Activated CD4-positive, alpha-beta T cell treated with anti-CD3 and anti-CD28 coated beads, Interleukin-2, amount 10 ng/mL, durations not matched to agents 24 days and 14 days (primary cell): ENCODE measurements at regions of chr16 and their contacts with region 1.

Region 1: DNA sequence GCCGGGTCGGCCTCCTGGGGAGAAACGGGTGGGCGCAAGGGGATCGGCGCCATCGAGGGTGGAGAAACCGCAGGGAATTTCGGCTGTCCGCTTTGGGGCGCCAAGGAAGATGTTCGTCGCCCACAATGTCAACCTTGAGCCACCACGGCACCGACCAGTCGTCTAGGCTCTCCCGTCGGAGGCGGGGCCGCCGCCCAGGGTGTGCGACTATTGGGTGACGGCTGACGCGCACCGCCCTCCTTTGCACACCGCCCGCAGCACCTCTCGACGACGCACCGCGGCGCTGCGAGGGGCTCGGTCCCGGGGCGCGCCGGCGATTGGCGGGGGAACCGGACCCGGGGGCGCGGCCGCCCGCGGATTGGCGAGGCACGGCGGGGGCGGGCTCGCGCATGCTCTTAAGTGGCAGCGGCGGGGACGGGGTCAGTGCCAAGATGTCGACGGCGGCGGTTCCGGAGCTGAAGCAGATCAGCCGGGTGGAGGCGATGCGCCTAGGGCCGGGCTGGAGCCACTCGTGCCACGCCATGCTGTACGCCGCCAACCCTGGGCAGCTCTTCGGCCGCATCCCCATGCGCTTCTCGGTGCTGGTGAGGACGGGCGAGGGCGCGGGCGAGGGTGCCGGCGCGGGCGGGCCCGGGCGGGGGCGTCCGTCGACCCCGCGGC is at the start of gene NUDT16L1:
- DNase-seq: peak; percentile 100
- H3K4me3 Mint-ChIP-seq: peak within 1 kb of the TSS; percentile 84
- H3K27ac Mint-ChIP-seq: peak within 1 kb of the TSS; percentile 78
- H3K4me1 Mint-ChIP-seq: peaks cover 11% of the 10 kb centered on the region
- H3K27me3 Mint-ChIP-seq: no peaks in the 10 kb centered on the region
- total RNA-seq, gene NUDT16L1: 35.4 and 36.1 TPM in 2 replicates

Region 2: DNA sequence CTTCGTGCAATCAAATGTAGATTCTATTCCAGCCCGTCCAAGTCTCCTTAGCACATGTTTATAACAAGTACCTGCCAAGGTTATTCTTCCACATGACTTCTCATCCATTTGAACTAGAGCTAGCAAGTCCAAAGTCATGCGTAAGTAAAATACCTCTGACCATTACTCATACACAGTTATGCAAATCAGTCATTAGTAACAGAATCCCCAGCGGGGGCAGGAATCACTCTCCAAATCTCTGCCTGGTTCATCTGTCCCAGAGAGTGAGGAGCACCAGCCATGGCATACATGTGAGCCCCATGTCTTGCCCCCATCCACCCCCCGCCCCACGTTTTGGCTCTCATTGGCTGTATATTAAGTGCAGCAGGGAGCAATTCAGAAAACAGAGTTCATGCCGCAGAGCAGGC is 479.2 kb before region 1 on chr16:
- intact Hi-C with region 1: no loop called
- DNase-seq: no peak
- H3K4me3 Mint-ChIP-seq: no peak overlapping the region
- H3K27ac Mint-ChIP-seq: no peak overlapping the region
- H3K4me1 Mint-ChIP-seq: no peaks in the 10 kb centered on the region
- H3K27me3 Mint-ChIP-seq: peaks cover 4% of the 10 kb centered on the region

Region 3: GRCh38 chr16:4675864-4676786 is 17.3 kb before region 1 on chr16:
- intact Hi-C with region 1: loop called (anchors 1 kb)
- DNase-seq: peak; percentile 93
- H3K4me3 Mint-ChIP-seq: peak overlapping the region; percentile 85
- H3K27ac Mint-ChIP-seq: peak overlapping the region; percentile 99
- H3K4me1 Mint-ChIP-seq: peaks cover 26% of the 10 kb centered on the region
- H3K27me3 Mint-ChIP-seq: no peaks in the 10 kb centered on the region

Region 4: GRCh38 chr16:4734063-4734729 is 40.8 kb after region 1 on chr16 and contains the starts of genes ANKS3 and DNAAF8:
- intact Hi-C with region 1: loop called (anchors 1 kb)
- DNase-seq: peak; percentile 96
- H3K4me3 Mint-ChIP-seq: peak within 1 kb of the TSS; percentile 93
- H3K27ac Mint-ChIP-seq: peak within 1 kb of the TSS; percentile 91
- H3K4me1 Mint-ChIP-seq: peaks cover 13% of the 10 kb centered on the region
- H3K27me3 Mint-ChIP-seq: no peaks in the 10 kb centered on the region
- total RNA-seq, gene ANKS3: 21.8 and 22.3 TPM in 2 replicates
- total RNA-seq, gene DNAAF8: not detected in 2 replicates